Adrenal gland (tissue), 19 donors: ENCODE measurements at regions of chrX and their contacts with region 1.

Region 1: DNA sequence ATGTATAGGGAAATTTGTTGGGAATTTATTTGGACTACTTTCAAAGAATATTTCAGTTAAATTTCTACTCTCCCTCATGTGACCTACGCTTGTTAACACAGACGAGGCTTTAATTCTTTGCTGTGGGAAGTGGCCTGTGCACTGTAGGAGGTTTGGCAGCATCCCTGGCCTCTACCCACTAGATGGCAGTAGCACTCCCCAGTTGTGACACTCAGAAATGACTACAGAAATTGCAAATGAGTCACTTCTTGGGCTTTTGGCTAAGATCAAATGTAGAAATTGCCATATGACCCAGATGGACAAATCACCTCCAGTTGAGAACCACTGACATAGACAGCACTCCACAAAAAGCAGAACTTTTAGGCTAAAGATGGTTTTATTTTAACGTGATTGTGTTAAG is 22.1 kb downstream of the PIR start:
- DNase-seq: peak; percentile 64 to 81 (median 68)
- H3K4me3 ChIP-seq: no peak overlapping the region
- H3K27ac ChIP-seq: no peak overlapping the region
- H3K4me1 ChIP-seq: no peaks in the 10 kb centered on the region
- H3K27me3 ChIP-seq: peaks cover 13% of the 10 kb centered on the region
- CTCF ChIP-seq: peak; percentile 58 to 85 (median 70)
- POLR2A ChIP-seq: no peak

Region 2: DNA sequence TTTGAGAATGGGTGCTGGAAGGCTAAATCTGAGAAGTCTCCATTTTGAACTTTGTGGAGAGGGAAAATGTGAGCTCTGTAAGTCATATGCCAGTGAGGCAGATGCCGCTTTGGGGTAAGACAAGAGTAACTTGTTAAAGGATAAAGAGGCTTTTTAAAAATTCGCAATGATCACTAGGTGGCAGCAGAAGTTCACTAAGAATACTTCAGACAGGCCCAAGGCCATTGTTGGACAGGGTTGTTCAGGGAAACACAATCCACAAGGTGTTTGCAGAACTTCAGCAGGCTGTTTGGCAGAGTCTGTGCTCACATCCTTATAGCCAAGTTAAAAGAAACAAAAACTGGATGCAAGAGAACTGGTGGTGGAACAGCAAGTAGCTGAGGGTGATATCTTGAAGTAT is 122.0 kb before region 1 on chrX:
- intact Hi-C with region 1: loop called in 1 of 2 experiments (anchors 5 kb)
- DNase-seq: peak; percentile 35 to 67 (median 52)
- H3K4me3 ChIP-seq: no peak overlapping the region
- H3K27ac ChIP-seq: no peak overlapping the region
- H3K4me1 ChIP-seq: no peaks in the 10 kb centered on the region
- H3K27me3 ChIP-seq: no peaks in the 10 kb centered on the region
- CTCF ChIP-seq: peak; percentile 28 to 63 (median 57)
- POLR2A ChIP-seq: no peak